ENCODE measurements at regions of chr6 and their contacts with region 1.

Region 1: GRCh38 chr6:96521644-96522464 is at the start of gene UFL1:
- DNase-seq: peak; percentile 89 to 99 (median 94)

Region 2: GRCh38 chr6:96015518-96016333 is 506.1 kb before region 1 on chr6 and contains the start of gene FUT9:
- intact Hi-C with region 1: loop called (anchors 10 kb)
- DNase-seq: peak; percentile 81 to 97 (median 84)

Region 3: DNA sequence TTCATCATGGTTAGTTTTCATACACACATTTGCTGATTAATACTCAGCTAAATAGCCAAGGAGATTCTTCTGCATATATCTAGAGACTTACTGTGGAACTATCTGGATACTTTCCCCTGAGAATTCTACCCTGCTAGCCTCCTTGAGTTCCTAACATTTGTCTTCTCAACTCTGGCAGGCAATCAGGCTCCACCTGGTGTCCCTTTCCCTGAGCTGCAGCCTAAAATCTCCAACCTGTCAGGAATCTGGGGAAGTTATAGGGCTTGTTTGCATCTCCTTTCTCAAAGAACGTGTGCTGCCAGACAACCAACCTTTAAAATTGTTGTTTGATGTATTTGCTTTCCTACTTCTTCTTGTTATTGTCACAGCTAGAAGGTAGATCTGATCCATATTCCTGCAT is 432.7 kb before region 1 on chr6:
- intact Hi-C with region 1: no loop called
- DNase-seq: peak in 1 of 10 donors; percentile 54

Region 4: GRCh38 chr6:96844530-96844929 is 322.7 kb after region 1 on chr6:
- intact Hi-C with region 1: no loop called
- DNase-seq: no peak

Region 5: DNA sequence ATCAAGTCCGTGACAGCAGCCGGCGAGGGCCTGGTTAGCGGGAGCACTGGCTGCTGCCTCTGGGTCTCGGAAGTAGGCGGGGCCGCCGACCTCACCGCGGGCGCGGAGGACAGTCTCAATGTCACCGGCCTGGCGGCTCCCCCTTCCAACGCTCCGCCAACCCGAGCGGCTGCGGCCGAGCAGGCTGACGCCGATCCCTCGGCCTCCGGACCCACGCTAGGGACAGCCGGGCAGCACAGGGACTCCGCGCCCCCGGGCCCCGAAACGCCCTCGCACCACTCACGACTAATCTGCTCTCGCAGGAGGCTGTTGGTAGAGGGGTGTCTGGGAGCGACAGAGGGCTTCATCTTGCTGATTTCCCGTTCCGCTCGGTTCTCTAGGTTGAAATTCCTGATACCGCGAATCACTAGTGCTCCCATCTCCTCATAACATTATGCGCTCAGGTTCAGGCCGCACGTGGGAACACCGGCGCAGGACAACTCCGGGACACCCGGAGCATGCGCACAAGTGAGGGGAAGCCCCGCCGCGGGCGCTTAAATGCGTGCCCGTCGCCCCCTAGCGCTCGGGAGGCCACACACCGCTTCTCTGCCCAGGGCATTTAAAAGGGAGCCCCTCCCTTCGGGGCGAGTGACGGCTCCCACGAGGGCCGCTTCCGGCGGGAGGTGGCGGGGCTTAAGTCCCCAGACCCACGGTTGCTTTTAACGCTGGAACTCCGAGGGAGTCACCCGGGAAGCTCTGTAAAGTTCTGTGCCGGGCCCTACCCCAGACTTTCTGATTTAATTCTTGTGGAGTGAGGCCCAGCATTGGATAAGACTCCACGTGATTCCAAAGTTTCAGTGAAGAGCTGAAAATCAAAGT is 375.8 kb after region 1 on chr6 and contains the start of gene NDUFAF4:
- intact Hi-C with region 1: loop called (anchors 5 kb)
- DNase-seq: peak; percentile 88 to 99 (median 94)